Gastrocnemius medialis (tissue), 4 donors: ENCODE measurements at regions of chr14 and their contacts with region 1.

Region 1: DNA sequence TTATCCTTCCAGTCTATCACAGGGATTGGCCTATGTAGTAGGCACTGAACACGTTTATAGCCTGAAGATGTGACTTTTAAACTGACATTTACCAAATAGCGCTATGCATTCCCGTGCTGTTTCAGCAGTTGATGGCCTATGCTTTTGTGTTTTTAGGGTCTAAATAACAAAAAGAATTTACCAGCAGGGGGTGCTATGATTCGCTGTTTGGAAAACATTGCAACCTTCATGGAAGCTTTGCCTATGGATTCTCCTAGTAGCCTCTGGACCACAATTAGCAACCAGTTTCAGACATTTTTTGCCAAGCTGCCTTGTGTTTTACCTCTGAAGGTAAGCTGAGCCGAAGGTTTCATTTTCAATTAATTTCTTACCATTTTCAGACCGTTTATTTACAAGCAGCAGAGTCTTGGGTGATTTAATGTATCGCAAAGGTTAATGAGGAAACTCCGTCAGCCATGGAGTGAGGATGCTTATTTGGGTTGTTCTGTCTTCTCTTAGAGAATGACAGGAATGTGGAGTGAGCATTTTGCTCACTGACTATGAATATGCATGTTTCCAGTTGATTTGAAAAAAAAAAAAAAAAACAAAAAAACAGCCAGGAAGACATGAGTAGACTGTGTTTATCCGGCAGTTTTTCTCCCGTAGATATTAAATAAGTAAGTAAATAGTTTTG is 133.1 kb downstream of the PRIMA1 start:
- DNase-seq: no peak
- ATAC-seq: peak; percentile 51 to 65
- H3K4me3 ChIP-seq: no peak overlapping the region
- H3K27ac ChIP-seq: no peak overlapping the region
- H3K4me1 ChIP-seq: no peaks in the 10 kb centered on the region
- H3K27me3 ChIP-seq: no peaks in the 10 kb centered on the region
- CTCF ChIP-seq: peak in 4 of 5 experiments; percentile 30 to 55 (median 45)
- POLR2A ChIP-seq: no peak

Region 2: GRCh38 chr14:93788543-93789227 is 133.5 kb after region 1 on chr14:
- in situ Hi-C with region 1: loop called in 1 of 4 experiments (anchors 10 kb)
- intact Hi-C with region 1: no loop called
- DNase-seq: no peak
- ATAC-seq: peak; percentile 85 to 87
- H3K4me3 ChIP-seq: peak overlapping the region; percentile 51 to 57 (median 56)
- H3K27ac ChIP-seq: no peak overlapping the region
- H3K4me1 ChIP-seq: no peaks in the 10 kb centered on the region
- H3K27me3 ChIP-seq: no peaks in the 10 kb centered on the region
- CTCF ChIP-seq: peak in 3 of 5 experiments; percentile 17 to 54 (median 28)
- POLR2A ChIP-seq: no peak

Region 3: DNA sequence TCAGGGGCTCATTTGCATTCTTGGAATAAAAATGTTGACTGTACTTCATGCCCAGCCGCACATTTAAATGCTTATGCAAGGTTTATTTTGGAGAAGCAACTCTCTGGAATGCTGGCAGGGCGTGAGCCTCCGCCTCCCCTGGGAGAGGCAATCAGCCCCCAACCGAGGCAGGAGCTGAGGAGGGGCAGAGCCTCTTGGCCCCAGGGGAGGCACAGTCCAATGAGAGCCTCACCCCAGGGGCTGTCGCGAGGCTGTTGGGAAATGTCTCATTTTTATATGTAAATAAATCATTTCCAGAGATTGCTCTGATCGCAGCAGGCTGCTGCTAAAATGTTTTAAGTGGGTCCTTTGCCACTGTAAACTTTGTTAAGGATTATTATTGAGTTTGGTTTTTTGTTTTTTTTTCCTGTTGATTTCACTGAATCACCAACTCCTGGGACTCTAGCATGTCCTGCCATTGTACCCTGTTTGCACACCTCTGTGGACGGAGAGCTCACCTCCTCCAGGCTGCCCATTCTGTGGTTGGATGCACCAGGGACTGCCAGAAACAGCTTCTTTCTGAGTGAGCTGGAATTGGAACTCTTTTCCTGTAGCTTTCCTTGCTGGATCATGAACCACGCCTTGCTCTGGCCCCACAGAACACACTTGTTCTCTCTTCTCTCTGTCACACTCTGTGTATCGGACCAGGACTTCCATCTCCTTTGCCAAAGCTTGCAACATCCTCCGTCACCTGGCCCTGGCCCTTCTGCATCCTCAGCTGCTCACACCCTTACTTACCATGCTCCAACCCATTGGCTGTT is 225.0 kb after region 1 on chr14:
- in situ Hi-C with region 1: loop called (anchors 5 to 25 kb)
- intact Hi-C with region 1: no loop called
- DNase-seq: no peak
- ATAC-seq: no peak
- H3K4me3 ChIP-seq: peak overlapping the region in 1 of 4 donors; percentile 25
- H3K27ac ChIP-seq: no peak overlapping the region
- H3K4me1 ChIP-seq: no peaks in the 10 kb centered on the region
- H3K27me3 ChIP-seq: no peaks in the 10 kb centered on the region
- CTCF ChIP-seq: no peak
- POLR2A ChIP-seq: no peak

Region 4: DNA sequence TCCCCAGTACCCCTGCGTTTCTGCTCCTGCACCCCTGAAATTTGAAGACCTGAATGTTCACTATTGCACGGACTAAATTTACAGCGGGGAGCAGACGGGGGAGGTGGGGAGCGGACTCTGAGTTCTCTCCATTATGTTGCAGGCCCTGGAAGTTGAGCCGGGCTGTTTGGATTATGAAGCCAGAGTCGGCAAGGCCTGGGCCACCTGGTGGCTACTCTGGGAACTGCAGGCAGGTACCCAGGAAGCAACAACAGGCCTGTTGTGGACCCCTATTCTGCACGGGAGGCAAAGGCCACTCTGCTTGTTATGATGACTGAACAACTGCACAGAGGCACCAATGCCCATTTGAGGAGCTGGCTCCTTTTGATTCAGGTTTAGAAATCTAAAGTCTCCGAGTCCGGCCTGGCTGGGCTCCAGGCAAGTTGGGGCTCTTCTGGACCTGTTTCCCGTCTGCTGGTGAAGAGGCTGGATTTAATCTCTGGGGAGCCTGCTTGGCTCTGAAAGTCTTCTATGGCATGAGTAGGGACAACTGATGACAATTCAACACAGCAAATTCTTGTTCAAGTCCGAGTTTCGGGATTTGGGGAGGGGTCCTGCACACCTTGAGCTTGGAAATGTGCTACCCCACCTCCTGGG is 237.8 kb after region 1 on chr14:
- in situ Hi-C with region 1: loop called (anchors 5 to 25 kb)
- intact Hi-C with region 1: loop called (anchors 2 kb)
- DNase-seq: peak in 1 of 2 donors; percentile 63
- ATAC-seq: peak in 1 of 2 donors; percentile 8
- H3K4me3 ChIP-seq: no peak overlapping the region
- H3K27ac ChIP-seq: no peak overlapping the region
- H3K4me1 ChIP-seq: no peaks in the 10 kb centered on the region
- H3K27me3 ChIP-seq: no peaks in the 10 kb centered on the region
- CTCF ChIP-seq: peak; percentile 90 to 97 (median 92)
- POLR2A ChIP-seq: no peak

Region 5: DNA sequence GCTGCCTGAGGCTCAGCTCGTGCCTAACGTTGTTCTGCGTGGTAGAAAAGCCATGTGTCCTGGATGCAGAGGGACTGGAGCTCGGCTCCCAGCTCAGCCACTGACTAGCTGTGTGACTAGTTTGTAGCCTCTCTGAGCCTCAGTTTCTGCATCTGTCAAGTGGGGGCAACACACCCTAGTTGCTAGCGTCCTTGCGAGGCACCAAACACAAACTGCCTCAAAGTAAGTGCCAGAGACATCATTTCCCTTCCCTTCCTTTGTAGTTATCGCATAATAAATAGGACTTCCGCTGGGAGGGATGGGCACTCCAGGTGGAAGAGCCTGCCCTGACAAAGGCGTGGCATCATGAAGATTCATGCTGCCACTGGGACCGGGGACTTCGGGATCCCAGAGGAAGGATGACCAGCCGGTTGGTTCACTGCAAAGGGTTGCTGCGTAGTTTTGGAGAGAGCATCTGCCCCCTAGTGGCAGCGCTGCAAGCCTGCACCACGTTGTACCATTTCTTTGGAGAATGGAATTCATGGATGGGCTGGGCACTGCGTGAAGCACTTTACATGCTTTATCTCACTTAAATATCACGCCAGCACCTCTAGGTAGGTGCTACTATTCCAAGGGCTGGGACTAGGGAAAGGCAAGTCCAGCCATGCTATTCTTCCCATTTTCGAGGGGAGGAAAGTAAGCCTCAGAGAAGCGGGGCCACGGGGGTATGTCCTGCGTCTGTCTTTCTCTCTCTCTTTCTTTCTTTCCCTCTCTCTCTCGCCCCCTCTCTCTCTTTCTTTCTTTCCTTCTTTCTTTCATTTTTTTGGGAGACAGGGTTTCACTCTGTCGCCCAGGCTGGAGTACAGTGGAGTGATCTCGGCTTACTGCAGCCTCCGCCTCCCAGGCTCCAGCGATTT is 346.5 kb after region 1 on chr14:
- in situ Hi-C with region 1: loop called in 1 of 4 experiments (anchors 10 kb)
- intact Hi-C with region 1: loop called (anchors 10 kb)
- DNase-seq: peak; percentile 52 to 76
- ATAC-seq: peak; percentile 66 to 76
- H3K4me3 ChIP-seq: no peak overlapping the region
- H3K27ac ChIP-seq: peak overlapping the region in 2 of 4 donors; percentile 2 to 56
- H3K4me1 ChIP-seq: peaks cover 29 to 33% of the 10 kb centered on the region in 2 donors
- H3K27me3 ChIP-seq: no peaks in the 10 kb centered on the region
- CTCF ChIP-seq: peak; percentile 89 to 97 (median 96)
- POLR2A ChIP-seq: no peak

Region 6: GRCh38 chr14:94136575-94137331 is 481.5 kb after region 1 on chr14:
- in situ Hi-C with region 1: no loop called
- intact Hi-C with region 1: loop called (anchors 5 kb)
- DNase-seq: peak; percentile 61 to 79
- ATAC-seq: peak; percentile 90 to 94
- H3K4me3 ChIP-seq: no peak overlapping the region
- H3K27ac ChIP-seq: no peak overlapping the region
- H3K4me1 ChIP-seq: peaks cover 0 to 3% of the 10 kb centered on the region in 2 donors
- H3K27me3 ChIP-seq: no peaks in the 10 kb centered on the region
- CTCF ChIP-seq: peak; percentile 88 to 99 (median 91)
- POLR2A ChIP-seq: no peak

Region 7: GRCh38 chr14:94180655-94181271 is 525.5 kb after region 1 on chr14:
- in situ Hi-C with region 1: loop called in 1 of 4 experiments (anchors 25 kb)
- intact Hi-C with region 1: no loop called
- DNase-seq: no peak
- ATAC-seq: peak; percentile 21 to 74
- H3K4me3 ChIP-seq: no peak overlapping the region
- H3K27ac ChIP-seq: no peak overlapping the region
- H3K4me1 ChIP-seq: no peaks in the 10 kb centered on the region
- H3K27me3 ChIP-seq: peaks cover 16 to 32% (median 23%) of the 10 kb centered on the region in 3 donors
- CTCF ChIP-seq: peak in 4 of 5 experiments; percentile 18 to 57 (median 41)
- POLR2A ChIP-seq: no peak